ENCODE measurements at regions of chr11 and their contacts with region 1.

Region 1: DNA sequence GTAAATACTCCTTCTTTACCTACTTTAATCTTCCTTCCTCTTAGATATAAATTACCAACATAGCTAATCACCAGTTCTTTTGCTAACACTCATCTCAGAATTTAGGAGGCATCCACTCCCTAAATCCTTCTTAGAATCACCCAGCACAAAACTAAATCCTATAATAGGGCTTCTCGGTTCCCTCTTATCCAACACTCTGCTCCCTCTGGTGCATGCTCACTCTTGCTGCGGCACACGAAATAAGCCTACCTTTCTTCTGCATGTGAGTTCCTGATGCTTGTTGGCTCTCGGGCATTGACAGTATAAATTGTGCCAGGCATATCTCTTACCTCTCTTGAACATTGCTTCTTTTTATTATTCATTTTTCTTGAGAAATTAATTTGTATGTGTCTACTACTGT is 61.0 kb downstream of the OR5AK2 start:
- DNase-seq: no peak
- H3K4me3 ChIP-seq: no peak overlapping the region
- H3K27ac ChIP-seq: no peak overlapping the region
- H3K4me1 ChIP-seq: no peaks in the 10 kb centered on the region
- H3K27me3 ChIP-seq: peaks cover 14% of the 10 kb centered on the region; the same call in 1 of the 2 replicates

Region 2: DNA sequence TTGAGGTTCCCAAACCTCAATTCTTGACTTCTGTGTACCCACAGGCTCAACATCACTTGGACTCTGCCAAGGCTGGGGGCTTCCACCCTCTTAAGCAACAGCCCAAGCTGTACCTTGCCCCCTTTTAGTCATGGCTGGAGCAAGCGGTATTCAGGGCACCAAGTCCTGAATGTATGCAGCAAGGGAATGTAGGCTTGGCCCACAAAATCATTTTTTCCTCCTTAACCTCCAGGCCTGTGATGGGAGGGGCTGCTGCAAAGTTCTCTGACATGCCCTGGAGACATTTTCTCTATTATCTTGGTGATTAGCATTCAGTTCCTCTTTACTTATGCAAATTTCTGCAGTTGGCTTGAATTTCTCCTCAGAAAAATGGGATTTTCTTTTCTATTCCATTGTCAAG is 1243.5 kb before region 1 on chr11:
- in situ Hi-C with region 1: loop called (anchors 25 kb)
- DNase-seq: no peak
- H3K4me3 ChIP-seq: no peak overlapping the region
- H3K27ac ChIP-seq: no peak overlapping the region
- H3K4me1 ChIP-seq: no peaks in the 10 kb centered on the region
- H3K27me3 ChIP-seq: no peaks in the 10 kb centered on the region

Region 3: GRCh38 chr11:56522008-56522407 is 527.7 kb before region 1 on chr11:
- in situ Hi-C with region 1: no loop called
- DNase-seq: peak; percentile 15
- H3K4me3 ChIP-seq: no peak overlapping the region
- H3K27ac ChIP-seq: no peak overlapping the region
- H3K4me1 ChIP-seq: no peaks in the 10 kb centered on the region
- H3K27me3 ChIP-seq: no peaks in the 10 kb centered on the region

Region 4: GRCh38 chr11:57144075-57144474 is 94.3 kb after region 1 on chr11:
- in situ Hi-C with region 1: no loop called
- DNase-seq: no peak
- H3K4me3 ChIP-seq: no peak overlapping the region
- H3K27ac ChIP-seq: no peak overlapping the region
- H3K4me1 ChIP-seq: no peaks in the 10 kb centered on the region
- H3K27me3 ChIP-seq: peaks cover 3% of the 10 kb centered on the region

Measured in GM23248 (cell line).